ENCODE measurements at regions of chr6 and their contacts with region 1.

Region 1: DNA sequence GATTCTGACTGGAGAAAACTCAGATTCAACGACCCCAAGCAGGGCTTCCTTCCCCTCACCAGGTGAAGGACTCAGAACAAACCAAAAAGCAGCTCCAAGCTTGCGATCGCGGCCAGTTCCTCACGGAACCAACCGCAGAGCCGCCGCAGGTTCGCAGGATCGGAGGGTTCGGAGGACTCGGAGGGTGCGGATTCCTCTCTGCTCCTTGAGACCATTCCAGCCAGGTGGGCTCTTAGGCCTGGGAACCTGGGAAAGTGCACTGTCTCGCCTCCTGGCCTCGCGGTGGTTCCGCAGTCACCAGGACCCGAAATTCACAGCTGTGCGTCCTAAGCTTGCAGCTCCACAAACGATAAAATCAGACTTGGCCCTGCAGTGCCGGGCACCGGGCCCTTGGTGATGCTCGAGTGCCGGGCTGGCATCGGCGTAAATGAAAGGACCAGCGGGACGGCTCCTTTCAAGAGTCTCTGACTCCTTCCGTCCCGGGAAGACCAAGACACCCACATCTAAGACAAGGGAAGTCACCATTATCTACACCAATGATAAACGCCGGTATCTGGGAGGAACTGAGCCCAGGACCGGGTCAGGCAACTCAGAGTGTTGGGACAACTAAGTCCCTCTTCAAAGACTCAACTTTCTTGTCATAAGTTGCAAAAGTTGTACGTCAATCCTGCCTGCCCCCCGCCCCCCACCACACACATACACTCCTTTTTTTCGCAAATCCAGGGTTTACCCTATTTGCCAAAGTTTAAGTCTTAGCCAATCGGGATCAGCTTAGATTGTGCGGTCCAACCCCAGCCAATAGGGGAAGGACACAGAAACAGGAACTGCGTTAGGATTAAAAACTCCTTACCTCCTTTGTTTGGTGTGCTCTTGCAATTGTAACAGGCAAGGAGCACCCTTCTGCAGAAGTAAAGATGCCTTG is 69.8 kb upstream of the PRSS16 start:
- DNase-seq: peak; percentile 84
- H3K4me3 Mint-ChIP-seq: peak overlapping the region; percentile 88
- H3K27ac Mint-ChIP-seq: peak overlapping the region; percentile 88
- H3K4me1 Mint-ChIP-seq: peaks cover 10% of the 10 kb centered on the region
- H3K27me3 Mint-ChIP-seq: peaks cover 1% of the 10 kb centered on the region

Region 2: DNA sequence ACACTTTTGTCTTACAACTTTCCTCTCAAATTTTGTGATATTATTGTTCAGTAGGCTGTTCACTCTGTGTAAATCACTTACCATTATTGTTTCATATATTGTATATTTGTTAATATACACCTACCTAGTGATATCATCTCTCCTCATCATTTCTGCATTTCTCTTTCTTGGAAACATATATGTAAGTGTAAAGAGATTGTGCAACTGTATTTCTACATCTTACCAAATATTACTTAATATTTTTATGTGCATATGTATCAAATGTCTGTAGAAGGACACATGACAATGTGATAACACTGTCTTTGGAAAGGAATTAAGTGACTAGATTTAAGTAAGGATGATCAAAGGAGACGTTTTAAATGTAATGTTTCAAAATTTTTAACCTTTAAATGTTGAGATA is 548.4 kb before region 1 on chr6:
- CTCF ChIA-PET with region 1: no interaction called
- POLR2A ChIA-PET with region 1: no interaction called
- intact Hi-C with region 1: no loop called
- DNase-seq: no peak
- H3K4me3 Mint-ChIP-seq: no peak overlapping the region
- H3K27ac Mint-ChIP-seq: no peak overlapping the region
- H3K4me1 Mint-ChIP-seq: no peaks in the 10 kb centered on the region
- H3K27me3 Mint-ChIP-seq: peaks cover 6% of the 10 kb centered on the region

Region 3: DNA sequence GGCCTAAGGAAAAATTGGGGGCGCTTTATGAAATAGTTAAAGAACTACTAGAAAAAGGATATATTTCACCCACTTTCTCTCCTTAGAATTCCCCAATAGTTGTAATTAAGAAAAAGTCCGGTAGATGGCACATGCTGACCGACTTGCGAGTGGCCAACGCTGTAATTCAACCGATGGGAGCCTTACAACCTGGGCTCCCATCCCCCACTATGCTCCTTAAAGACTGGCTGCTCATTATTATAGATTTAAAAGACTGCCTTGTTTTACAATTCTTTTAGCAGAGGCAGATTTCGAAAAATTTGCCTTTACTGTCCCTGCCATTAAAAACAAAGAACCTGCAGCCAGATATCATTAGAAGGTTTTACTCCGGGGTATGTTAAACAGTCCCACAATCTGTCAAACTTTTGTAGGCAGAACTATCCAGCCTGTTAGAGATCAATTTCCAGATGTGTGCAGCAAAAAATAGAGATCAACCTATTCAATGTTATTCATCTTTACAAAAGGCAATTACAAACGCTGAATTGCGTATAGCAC is 11.2 kb after region 1 on chr6:
- CTCF ChIA-PET with region 1: interaction called, 9 read pairs
- POLR2A ChIA-PET with region 1: no interaction called
- intact Hi-C with region 1: loop called (anchors 1 kb)
- DNase-seq: peak; percentile 61
- H3K4me3 Mint-ChIP-seq: peak overlapping the region; percentile 78
- H3K27ac Mint-ChIP-seq: peak overlapping the region; percentile 8
- H3K4me1 Mint-ChIP-seq: peaks cover 6% of the 10 kb centered on the region
- H3K27me3 Mint-ChIP-seq: no peaks in the 10 kb centered on the region

Region 4: DNA sequence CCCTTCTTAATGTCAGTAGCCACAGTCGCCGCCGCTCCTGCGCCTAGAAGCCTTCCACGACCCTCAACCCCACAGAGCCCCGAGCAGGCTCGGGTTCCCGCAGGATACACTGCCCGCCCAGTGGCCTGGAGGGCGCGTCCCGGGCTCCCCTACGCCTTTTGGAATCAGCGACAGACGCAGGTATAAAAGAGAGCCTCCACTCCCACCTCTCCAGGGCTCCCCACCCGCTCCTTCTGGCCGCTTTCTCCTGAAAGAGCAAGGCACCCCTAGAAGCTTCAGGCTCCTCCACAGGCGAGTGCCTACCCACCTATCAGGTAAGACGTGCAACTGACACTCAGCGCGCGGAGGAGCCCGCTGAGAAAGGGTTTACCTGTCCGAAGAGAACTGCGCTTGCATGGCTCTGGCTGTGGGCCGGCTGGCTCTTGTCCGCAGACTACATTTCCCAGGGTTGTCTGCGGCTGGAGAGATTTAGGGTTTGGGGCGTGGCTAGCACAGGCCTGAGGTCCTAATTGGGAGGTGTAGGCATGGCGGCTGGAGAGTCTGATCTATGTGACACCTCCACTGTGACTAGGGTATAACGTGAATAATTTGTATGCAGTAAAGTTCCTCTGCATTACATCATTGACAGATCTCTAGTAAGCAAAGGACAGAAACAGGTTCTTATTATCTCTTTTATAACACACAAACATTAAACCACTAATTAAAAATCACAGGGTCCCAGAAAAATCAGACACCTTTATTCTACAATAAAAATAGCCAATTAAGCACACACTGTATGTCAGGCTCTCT is 197.3 kb after region 1 on chr6:
- CTCF ChIA-PET with region 1: no interaction called
- POLR2A ChIA-PET with region 1: no interaction called
- intact Hi-C with region 1: no loop called
- DNase-seq: peak; percentile 86
- H3K4me3 Mint-ChIP-seq: peak overlapping the region; percentile 81
- H3K27ac Mint-ChIP-seq: peak overlapping the region; percentile 59
- H3K4me1 Mint-ChIP-seq: peaks cover 19% of the 10 kb centered on the region
- H3K27me3 Mint-ChIP-seq: no peaks in the 10 kb centered on the region

Region 5: GRCh38 chr6:27388293-27389197 is 210.8 kb after region 1 on chr6 and contains the start of gene ZNF391:
- CTCF ChIA-PET with region 1: no interaction called
- POLR2A ChIA-PET with region 1: no interaction called
- intact Hi-C with region 1: loop called (anchors 5 kb)
- DNase-seq: peak; percentile 78
- H3K4me3 Mint-ChIP-seq: peak within 1 kb of the TSS; percentile 93
- H3K27ac Mint-ChIP-seq: peak within 1 kb of the TSS; percentile 91
- H3K4me1 Mint-ChIP-seq: peaks cover 10% of the 10 kb centered on the region
- H3K27me3 Mint-ChIP-seq: no peaks in the 10 kb centered on the region
- total RNA-seq, gene ZNF391: 2.8 to 3.2 TPM

Region 6: GRCh38 chr6:27518881-27519795 is 341.4 kb after region 1 on chr6:
- CTCF ChIA-PET with region 1: interaction called, 4 read pairs
- POLR2A ChIA-PET with region 1: no interaction called
- intact Hi-C with region 1: loop called (anchors 5 kb)
- DNase-seq: peak; percentile 70
- H3K4me3 Mint-ChIP-seq: peak overlapping the region; percentile 79
- H3K27ac Mint-ChIP-seq: peak overlapping the region; percentile 77
- H3K4me1 Mint-ChIP-seq: peaks cover 19% of the 10 kb centered on the region
- H3K27me3 Mint-ChIP-seq: peaks cover 17% of the 10 kb centered on the region

Measured in activated CD4-positive, alpha-beta memory T cell treated with anti-CD3 and anti-CD28 coated beads for 36 hours (primary cell).